CD4-positive, alpha-beta memory T cell (primary cell): ENCODE measurements at regions of chr22 and their contacts with region 1.

Region 1: GRCh38 chr22:36884349-36885117 is 23.7 kb downstream of the NCF4 start:
- DNase-seq: no peak
- H3K4me3 ChIP-seq: no peak overlapping the region
- H3K4me3 Mint-ChIP-seq: no peak overlapping the region
- H3K27ac ChIP-seq: no peak overlapping the region
- H3K27ac Mint-ChIP-seq: no peak overlapping the region
- H3K4me1 ChIP-seq: peaks cover 21% of the 10 kb centered on the region
- H3K4me1 Mint-ChIP-seq: peaks cover 7 to 8% (median 7%) of the 10 kb centered on the region in 4 donors
- H3K27me3 ChIP-seq: no peaks in the 10 kb centered on the region
- H3K27me3 Mint-ChIP-seq: peaks cover 0 to 2% of the 10 kb centered on the region in 2 donors

Region 2: GRCh38 chr22:36873680-36874537 is 10.6 kb before region 1 on chr22:
- CTCF ChIA-PET with region 1: interaction called, 10 read pairs
- POLR2A ChIA-PET with region 1: interaction called, 15 read pairs
- intact Hi-C with region 1: no loop called
- DNase-seq: peak in 2 of 5 donors; percentile 25 to 34
- H3K4me3 ChIP-seq: no peak overlapping the region
- H3K4me3 Mint-ChIP-seq: peak overlapping the region in 7 of 8 donors; percentile 23 to 54 (median 42)
- H3K27ac ChIP-seq: peak overlapping the region; percentile 27
- H3K27ac Mint-ChIP-seq: peak overlapping the region; percentile 81 to 91 (median 87)
- H3K4me1 ChIP-seq: peaks cover 19% of the 10 kb centered on the region
- H3K4me1 Mint-ChIP-seq: peaks cover 10 to 15% (median 13%) of the 10 kb centered on the region in 4 donors
- H3K27me3 ChIP-seq: no peaks in the 10 kb centered on the region
- H3K27me3 Mint-ChIP-seq: no peaks in the 10 kb centered on the region